IMR-90 (cell line): ENCODE measurements at regions of chr14 and their contacts with region 1.

Region 1: DNA sequence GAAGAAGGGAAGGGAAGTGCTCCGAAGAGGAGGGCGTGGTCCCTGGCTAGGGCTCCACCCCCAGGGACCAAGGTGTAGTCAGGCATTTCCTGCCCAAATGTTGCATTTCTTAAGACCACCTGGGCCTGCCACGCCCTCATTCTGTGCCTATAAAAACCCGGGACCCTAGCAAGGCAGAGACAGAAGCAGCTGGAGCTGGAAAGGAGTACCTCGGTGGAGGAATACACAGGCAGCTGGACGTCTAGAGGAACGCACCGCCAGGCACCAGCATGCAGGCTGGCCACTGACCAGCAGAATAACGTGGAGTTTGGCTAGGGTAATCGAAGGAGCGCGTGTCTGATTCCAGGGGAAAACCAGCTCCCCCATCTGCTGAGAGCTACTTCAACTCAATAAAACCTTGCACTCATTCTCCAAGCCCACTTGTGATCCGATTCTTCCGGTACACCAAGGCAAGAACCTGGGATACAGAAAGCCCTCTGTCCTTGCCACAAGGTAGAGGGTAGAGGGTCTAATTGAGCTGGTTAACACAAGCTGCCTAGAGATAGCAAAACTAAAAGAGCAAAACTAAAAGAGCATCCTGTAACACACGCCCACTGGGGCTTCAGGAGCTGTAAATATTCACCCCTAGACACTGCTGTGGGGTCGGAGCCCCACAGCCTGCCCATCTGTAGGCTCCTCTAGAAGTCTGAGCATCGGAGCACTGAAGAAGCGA is 21.0 kb downstream of the CFL2 start:
- DNase-seq: no peak
- ATAC-seq: no peak; the same call in 1 of the 2 replicates
- H3K4me3 ChIP-seq: no peak overlapping the region
- H3K27ac ChIP-seq: no peak overlapping the region
- H3K4me1 ChIP-seq: no peaks in the 10 kb centered on the region
- H3K27me3 ChIP-seq: no peaks in the 10 kb centered on the region
- CTCF ChIP-seq: no peak
- POLR2A ChIP-seq: no peak
- RAD21 ChIP-seq: no peak

Region 2: GRCh38 chr14:34355584-34356263 is 337.7 kb before region 1 on chr14:
- CTCF ChIA-PET with region 1: no interaction called
- POLR2A ChIA-PET with region 1: no interaction called
- dilution Hi-C with region 1: no loop called
- in situ Hi-C with region 1: no loop called
- intact Hi-C with region 1: no loop called
- DNase-seq: peak; percentile 75
- ATAC-seq: peak; percentile 79
- H3K4me3 ChIP-seq: no peak overlapping the region
- H3K27ac ChIP-seq: no peak overlapping the region; the same call in 1 of the 2 replicates
- H3K4me1 ChIP-seq: peaks cover 3% of the 10 kb centered on the region; the same call in 1 of the 2 replicates
- H3K27me3 ChIP-seq: no peaks in the 10 kb centered on the region
- CTCF ChIP-seq: no peak
- POLR2A ChIP-seq: no peak
- RAD21 ChIP-seq: no peak

Region 3: DNA sequence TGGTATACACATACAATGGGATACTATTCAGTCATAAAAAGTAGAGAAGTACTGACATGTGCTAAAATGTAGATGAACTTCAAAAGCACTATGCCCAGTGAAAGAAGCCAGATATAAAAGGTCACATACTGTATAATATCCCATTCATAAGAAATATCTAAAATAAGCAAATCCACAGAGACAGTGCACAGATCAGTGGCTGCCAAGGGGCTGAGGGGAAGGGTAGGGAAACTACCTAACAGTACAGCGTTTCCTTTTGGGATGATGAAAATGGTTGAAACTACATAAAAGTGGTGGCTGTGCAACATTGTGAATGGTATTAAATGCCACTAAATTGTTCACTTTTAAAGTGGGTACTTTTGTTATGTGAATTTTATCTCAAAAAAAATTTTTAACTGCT is 165.8 kb before region 1 on chr14:
- CTCF ChIA-PET with region 1: no interaction called
- POLR2A ChIA-PET with region 1: no interaction called
- dilution Hi-C with region 1: no loop called
- in situ Hi-C with region 1: no loop called
- intact Hi-C with region 1: no loop called
- DNase-seq: no peak
- ATAC-seq: no peak
- H3K4me3 ChIP-seq: no peak overlapping the region
- H3K27ac ChIP-seq: no peak overlapping the region
- H3K4me1 ChIP-seq: no peaks in the 10 kb centered on the region
- H3K27me3 ChIP-seq: no peaks in the 10 kb centered on the region
- CTCF ChIP-seq: no peak
- POLR2A ChIP-seq: no peak
- RAD21 ChIP-seq: no peak

Region 4: DNA sequence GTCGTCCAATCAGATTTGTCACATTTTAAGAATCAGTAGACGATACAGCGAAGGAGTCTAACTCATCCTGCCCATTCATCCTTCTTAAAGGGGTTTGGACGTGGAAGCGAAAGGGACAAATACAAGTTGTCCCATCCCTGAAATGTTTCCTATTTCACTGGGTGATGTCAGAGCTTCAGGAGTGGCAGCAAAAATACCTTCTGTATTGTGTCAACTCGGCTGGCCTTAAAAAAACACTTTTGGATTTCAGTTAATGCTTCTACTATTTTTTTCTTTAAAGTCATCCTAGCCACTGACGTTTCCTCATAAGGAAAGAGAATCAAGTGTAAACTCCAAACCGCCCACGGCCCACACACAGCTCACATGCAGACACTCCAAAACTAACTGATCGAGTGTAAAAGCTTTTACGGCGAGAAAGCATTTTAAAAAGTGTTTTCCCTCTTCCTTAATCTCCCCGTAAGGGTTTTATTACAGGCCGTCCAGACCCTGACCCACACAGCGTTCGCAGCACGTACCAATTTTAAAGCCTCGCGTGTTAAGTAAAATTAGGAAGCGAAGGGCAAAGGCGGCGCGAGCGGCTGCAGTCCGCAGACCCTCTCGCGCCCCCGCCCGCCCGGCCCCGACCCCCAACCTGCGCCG is 20.4 kb after region 1 on chr14:
- CTCF ChIA-PET with region 1: interaction called, 12 read pairs
- POLR2A ChIA-PET with region 1: no interaction called
- dilution Hi-C with region 1: no loop called
- in situ Hi-C with region 1: no loop called
- intact Hi-C with region 1: no loop called
- DNase-seq: peak; percentile 84
- ATAC-seq: peak; percentile 22
- H3K4me3 ChIP-seq: peak overlapping the region; percentile 77
- H3K27ac ChIP-seq: peak overlapping the region; percentile 97
- H3K4me1 ChIP-seq: peaks cover 6% of the 10 kb centered on the region
- H3K27me3 ChIP-seq: no peaks in the 10 kb centered on the region
- CTCF ChIP-seq: no peak
- POLR2A ChIP-seq: peak; percentile 64
- RAD21 ChIP-seq: no peak; the same call in 1 of the 2 replicates